ENCODE measurements at regions of chr1 and their contacts with region 1.

Region 1: DNA sequence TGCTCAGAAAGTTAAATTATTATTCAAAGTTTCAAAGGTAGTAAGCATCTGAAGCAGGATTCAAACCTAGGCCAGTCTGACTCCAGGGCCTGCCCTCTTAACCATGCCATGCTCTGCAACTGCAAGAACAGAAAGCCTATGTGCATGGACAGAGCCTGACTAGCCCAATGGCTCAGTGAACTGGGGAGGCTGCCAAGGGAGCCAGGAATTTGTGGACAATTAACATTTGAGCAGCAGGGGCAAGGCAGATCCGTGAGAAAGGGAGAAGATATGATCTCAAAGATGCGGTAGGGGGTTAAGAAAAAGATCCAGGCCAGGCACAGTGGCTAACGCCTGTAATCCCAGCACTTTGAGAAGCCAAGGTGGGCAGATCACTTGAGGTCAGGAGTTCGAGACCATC is 6.5 kb upstream of the ATP1A4 start:
- DNase-seq: no peak
- H3K4me3 ChIP-seq: no peak overlapping the region
- H3K27ac ChIP-seq: no peak overlapping the region
- H3K4me1 ChIP-seq: no peaks in the 10 kb centered on the region
- H3K27me3 ChIP-seq: no peaks in the 10 kb centered on the region
- CTCF ChIP-seq: no peak

Region 2: GRCh38 chr1:159970932-159971342 is 174.0 kb before region 1 on chr1:
- CTCF ChIA-PET with region 1: no interaction called
- dilution Hi-C with region 1: no loop called
- in situ Hi-C with region 1: no loop called
- intact Hi-C with region 1: no loop called
- DNase-seq: no peak
- H3K4me3 ChIP-seq: no peak overlapping the region
- H3K27ac ChIP-seq: no peak overlapping the region
- H3K4me1 ChIP-seq: no peaks in the 10 kb centered on the region
- H3K27me3 ChIP-seq: no peaks in the 10 kb centered on the region
- CTCF ChIP-seq: no peak

Region 3: DNA sequence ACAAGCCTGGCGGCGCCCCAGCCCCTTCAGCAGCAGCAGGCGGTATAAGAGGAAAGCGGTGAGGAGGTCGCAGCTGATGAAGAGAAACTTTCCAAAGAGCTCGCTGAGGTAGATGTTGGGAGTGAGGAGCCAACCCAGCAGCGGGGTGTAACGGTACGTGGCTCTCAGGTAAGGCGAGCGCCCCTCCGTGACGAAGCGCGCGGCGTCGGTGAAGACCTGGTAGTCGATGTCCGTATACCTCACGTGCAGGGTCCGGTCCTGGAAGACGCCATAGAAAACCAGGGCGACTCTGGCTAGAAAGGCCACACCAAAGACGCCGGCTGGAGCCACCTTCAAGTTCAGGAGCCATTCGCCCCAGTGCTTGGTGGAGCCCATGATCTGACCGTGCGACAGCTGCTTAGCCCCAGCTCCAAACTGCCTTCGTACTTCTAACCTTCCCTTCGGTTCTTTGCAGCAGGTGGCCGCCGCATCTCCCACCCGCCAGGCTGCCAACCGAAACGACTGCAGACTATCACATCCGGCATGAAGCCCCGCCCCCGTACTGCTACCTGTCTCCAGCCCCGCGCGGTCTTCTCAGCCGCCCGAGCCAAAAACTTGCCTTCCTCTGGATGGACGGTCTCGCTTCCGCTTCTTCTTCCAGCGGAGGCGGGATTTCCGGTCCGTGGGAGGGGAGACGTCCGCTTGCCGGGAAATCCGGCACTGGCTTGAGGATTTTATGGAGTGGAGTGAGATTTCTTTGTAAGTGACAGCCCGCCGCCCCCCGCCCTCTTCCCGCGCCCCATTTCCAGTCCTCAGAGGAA is 113.4 kb before region 1 on chr1 and contains the start of gene PIGM:
- CTCF ChIA-PET with region 1: interaction called, 15 read pairs
- dilution Hi-C with region 1: no loop called
- in situ Hi-C with region 1: no loop called
- intact Hi-C with region 1: no loop called
- DNase-seq: peak; percentile 97
- H3K4me3 ChIP-seq: peak within 1 kb of the TSS; percentile 81 to 94 (median 82)
- H3K27ac ChIP-seq: peak within 1 kb of the TSS; percentile 68
- H3K4me1 ChIP-seq: peaks cover 13% of the 10 kb centered on the region
- H3K27me3 ChIP-seq: no peaks in the 10 kb centered on the region
- CTCF ChIP-seq: no peak
- total RNA-seq, gene PIGM: 5.8 TPM

Region 4: GRCh38 chr1:160108888-160109662 is 35.8 kb before region 1 on chr1:
- CTCF ChIA-PET with region 1: no interaction called
- dilution Hi-C with region 1: no loop called
- in situ Hi-C with region 1: loop called in 1 of 2 experiments (anchors 5 kb)
- intact Hi-C with region 1: no loop called
- DNase-seq: no peak
- H3K4me3 ChIP-seq: no peak overlapping the region
- H3K27ac ChIP-seq: no peak overlapping the region
- H3K4me1 ChIP-seq: no peaks in the 10 kb centered on the region
- H3K27me3 ChIP-seq: no peaks in the 10 kb centered on the region
- CTCF ChIP-seq: peak; percentile 44 to 51

Region 5: GRCh38 chr1:160124705-160125478 is 20.0 kb before region 1 on chr1:
- CTCF ChIA-PET with region 1: no interaction called
- dilution Hi-C with region 1: no loop called
- in situ Hi-C with region 1: no loop called
- intact Hi-C with region 1: loop called (anchors 2 kb)
- DNase-seq: peak; percentile 84
- H3K4me3 ChIP-seq: no peak overlapping the region
- H3K27ac ChIP-seq: peak overlapping the region; percentile 11
- H3K4me1 ChIP-seq: peaks cover 25% of the 10 kb centered on the region
- H3K27me3 ChIP-seq: no peaks in the 10 kb centered on the region
- CTCF ChIP-seq: peak in 1 of 2 donors; percentile 46

Measured in mammary epithelial cell (primary cell).